ENCODE measurements at regions of chr11 and their contacts with region 1.

Region 1: DNA sequence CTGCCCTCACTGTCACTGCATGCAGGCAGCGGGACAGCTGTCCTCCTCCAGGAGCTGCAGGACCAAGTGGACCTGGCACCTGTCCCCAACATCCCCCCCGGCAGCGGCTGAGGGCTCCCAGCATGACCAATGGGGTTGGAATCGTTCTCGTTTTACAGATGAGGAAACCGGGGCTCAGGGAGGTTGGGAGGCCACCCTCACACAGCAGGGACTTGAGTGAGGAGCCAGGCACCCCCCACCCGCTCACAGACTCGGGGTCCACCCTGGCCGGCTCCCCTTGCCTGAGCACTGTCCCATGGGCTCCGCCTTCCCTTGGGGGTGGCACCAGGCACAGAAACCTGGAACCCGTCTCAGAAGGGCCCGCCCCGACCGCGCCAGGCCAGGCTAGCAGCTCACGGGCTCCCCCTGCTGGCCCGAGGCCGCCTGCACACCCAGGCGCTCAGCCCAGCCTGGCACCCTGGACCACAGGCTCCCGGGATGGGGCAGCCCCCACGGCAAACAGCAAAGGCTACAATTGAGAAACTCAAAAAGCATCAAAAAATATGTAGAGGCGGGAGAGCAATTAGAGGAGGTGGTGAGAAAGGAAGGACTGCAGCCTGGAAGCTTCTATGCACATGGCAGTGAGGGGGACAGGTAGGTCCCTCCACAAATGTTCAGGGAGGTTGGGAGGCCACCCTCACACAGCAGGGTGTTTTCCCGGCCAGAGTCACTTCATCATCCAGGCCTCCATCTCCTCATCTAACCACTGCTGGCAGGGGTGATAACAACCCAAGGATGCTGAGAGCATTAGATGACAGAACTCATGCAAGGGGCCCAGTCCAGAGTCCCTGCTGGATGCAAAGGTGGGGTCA is 12.8 kb downstream of the MACROD1 start:
- DNase-seq: peak in 7 of 10 donors; percentile 54 to 84 (median 66)
- H3K4me3 ChIP-seq: peak overlapping the region in 31 of 59 donors; percentile 3 to 47 (median 26)
- H3K27ac ChIP-seq: no peak overlapping the region
- H3K27me3 ChIP-seq: no peaks in the 10 kb centered on the region
- CTCF ChIP-seq: peak; percentile 88 to 100 (median 99)

Region 2: DNA sequence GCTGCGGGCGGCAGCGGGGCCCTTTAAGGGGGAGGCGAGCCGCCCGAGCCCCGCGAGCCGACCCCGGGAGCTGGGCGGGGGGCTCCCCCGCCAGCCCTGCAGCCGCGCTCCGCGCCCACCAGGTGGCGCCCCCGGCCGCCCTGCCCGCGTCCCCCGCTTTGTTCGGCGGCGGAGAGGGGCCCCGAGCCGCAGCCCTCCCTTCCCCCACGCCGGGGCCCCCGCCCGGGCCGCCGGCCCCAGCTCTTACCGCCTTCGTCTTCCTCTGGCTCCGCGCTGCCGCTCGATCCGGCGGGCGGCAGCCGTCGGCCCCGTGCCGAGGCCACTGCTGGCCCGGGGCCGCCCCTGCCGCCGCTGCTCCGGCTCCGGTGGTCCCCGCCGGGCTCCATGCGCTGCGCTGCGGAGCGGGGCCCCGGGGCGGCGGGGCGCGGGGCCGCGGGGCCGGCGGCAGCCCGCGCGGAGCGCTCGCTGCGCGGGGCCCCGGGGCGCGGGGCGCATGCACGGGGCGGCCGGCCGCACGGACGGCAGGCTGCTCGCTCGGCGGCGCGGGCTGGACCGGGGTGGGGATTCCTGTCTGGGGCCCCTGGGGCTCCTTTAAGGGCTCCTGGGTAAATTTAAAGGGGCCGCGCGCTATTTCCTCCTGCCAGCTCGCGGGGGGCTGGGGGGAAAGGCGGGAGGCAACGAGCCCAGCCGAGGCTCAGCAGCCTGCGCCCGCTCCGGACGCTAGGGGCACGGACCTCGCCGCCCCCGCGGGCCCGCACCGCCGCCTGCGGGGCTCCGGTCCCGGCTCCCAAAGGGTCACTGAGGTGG is 384.6 kb before region 1 on chr11 and contains the start of gene ZFTA:
- intact Hi-C with region 1: loop called in 1 of 2 experiments (anchors 10 kb)
- DNase-seq: peak in 5 of 10 donors; percentile 52 to 76 (median 59)
- H3K4me3 ChIP-seq: peak within 1 kb of the TSS; percentile 62 to 87 (median 78)
- H3K27ac ChIP-seq: peak within 1 kb of the TSS in 55 of 59 donors; percentile 29 to 89 (median 80)
- H3K27me3 ChIP-seq: no peaks in the 10 kb centered on the region
- CTCF ChIP-seq: peak in 41 of 56 donors; percentile 0 to 92 (median 64)
- total RNA-seq, gene ZFTA: 8.7 to 41.2 (median 25.3) TPM

Region 3: GRCh38 chr11:63838678-63839507 is 314.2 kb before region 1 on chr11 and contains the start of gene MARK2:
- intact Hi-C with region 1: loop called (anchors 2 to 5 kb)
- DNase-seq: peak; percentile 96 to 100 (median 98)
- H3K4me3 ChIP-seq: peak within 1 kb of the TSS; percentile 63 to 95 (median 83)
- H3K27ac ChIP-seq: peak within 1 kb of the TSS; percentile 55 to 98 (median 91)
- H3K27me3 ChIP-seq: no peaks in the 10 kb centered on the region
- CTCF ChIP-seq: peak in 23 of 56 donors; percentile 1 to 57 (median 23)
- total RNA-seq, gene MARK2: 47.0 to 75.5 (median 57.9) TPM

Region 4: GRCh38 chr11:64000026-64000739 is 152.9 kb before region 1 on chr11:
- intact Hi-C with region 1: loop called (anchors 1 kb)
- DNase-seq: peak in 7 of 10 donors; percentile 44 to 85 (median 61)
- H3K4me3 ChIP-seq: peak overlapping the region; percentile 7 to 63 (median 46)
- H3K27ac ChIP-seq: peak overlapping the region in 11 of 59 donors; percentile 3 to 72 (median 32)
- H3K27me3 ChIP-seq: no peaks in the 10 kb centered on the region
- CTCF ChIP-seq: peak; percentile 37 to 96 (median 80)

Region 5: GRCh38 chr11:64036087-64037026 is 116.7 kb before region 1 on chr11:
- intact Hi-C with region 1: loop called (anchors 1 to 2 kb)
- DNase-seq: peak in 7 of 10 donors; percentile 40 to 76 (median 53)
- H3K4me3 ChIP-seq: peak overlapping the region; percentile 54 to 92 (median 77)
- H3K27ac ChIP-seq: peak overlapping the region; percentile 49 to 96 (median 90)
- H3K27me3 ChIP-seq: no peaks in the 10 kb centered on the region
- CTCF ChIP-seq: peak in 16 of 56 donors; percentile 7 to 30 (median 18)

Region 6: GRCh38 chr11:64100360-64100759 is 52.7 kb before region 1 on chr11:
- intact Hi-C with region 1: loop called (anchors 5 kb)
- DNase-seq: peak in 3 of 10 donors; percentile 50 to 68 (median 54)
- H3K4me3 ChIP-seq: no peak overlapping the region
- H3K27ac ChIP-seq: peak overlapping the region in 58 of 59 donors; percentile 32 to 99 (median 88)
- H3K27me3 ChIP-seq: no peaks in the 10 kb centered on the region
- CTCF ChIP-seq: peak in 48 of 56 donors; percentile 13 to 63 (median 45)